ENCODE measurements at regions of chr6 and their contacts with region 1.

Region 1: GRCh38 chr6:21265730-21266044 is 327.9 kb upstream of the SOX4 start:
- DNase-seq: no peak
- H3K4me3 ChIP-seq: no peak overlapping the region
- H3K27ac ChIP-seq: no peak overlapping the region
- H3K4me1 ChIP-seq: no peaks in the 10 kb centered on the region
- H3K27me3 ChIP-seq: no peaks in the 10 kb centered on the region
- CTCF ChIP-seq: no peak

Region 2: GRCh38 chr6:21426832-21427490 is 161.3 kb after region 1 on chr6:
- CTCF ChIA-PET with region 1: interaction called, 10 read pairs
- POLR2A ChIA-PET with region 1: no interaction called
- intact Hi-C with region 1: no loop called
- DNase-seq: no peak
- H3K4me3 ChIP-seq: no peak overlapping the region
- H3K27ac ChIP-seq: no peak overlapping the region
- H3K4me1 ChIP-seq: no peaks in the 10 kb centered on the region
- H3K27me3 ChIP-seq: no peaks in the 10 kb centered on the region
- CTCF ChIP-seq: no peak

Measured in A673 (cell line).